ENCODE measurements at regions of chr3 and their contacts with region 1.

Region 1: DNA sequence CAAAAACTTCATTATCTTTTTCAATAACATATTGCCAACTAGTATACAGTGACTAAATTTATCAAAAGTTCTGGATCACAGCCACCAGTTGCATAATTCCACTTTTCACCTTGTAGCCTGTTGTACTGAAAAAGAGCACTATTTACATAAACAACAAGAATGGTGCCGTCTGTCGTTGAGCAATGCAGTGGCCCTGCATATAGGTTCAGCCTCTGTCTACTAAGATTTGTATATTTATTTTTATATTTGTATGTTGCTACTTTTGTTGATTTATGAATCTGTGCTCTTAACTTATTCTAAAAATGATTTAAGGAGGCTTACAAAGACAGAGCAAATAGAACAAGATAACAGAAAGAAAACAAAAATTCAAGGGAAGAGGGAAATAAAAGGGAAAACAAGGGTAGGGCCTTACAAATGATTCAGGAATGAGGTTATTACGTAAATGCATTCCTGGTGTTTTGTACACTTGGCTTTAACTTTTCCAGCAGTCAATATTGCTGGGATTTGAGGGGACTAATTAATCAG is 257.6 kb upstream of the STT3B start:
- DNase-seq: no peak
- ATAC-seq: peak; percentile 52
- H3K4me3 ChIP-seq: no peak overlapping the region
- H3K27ac ChIP-seq: peak overlapping the region; percentile 53 to 71
- H3K4me1 ChIP-seq: peaks cover 2 to 6% of the 10 kb centered on the region in 2 donors
- H3K27me3 ChIP-seq: no peaks in the 10 kb centered on the region

Region 2: GRCh38 chr3:31196881-31197364 is 78.2 kb before region 1 on chr3:
- intact Hi-C with region 1: loop called in 1 of 2 experiments (anchors 10 kb)
- DNase-seq: peak; percentile 59 to 82
- ATAC-seq: peak; percentile 49
- H3K4me3 ChIP-seq: peak overlapping the region in 1 of 2 donors; percentile 9
- H3K27ac ChIP-seq: peak overlapping the region in 1 of 2 donors; percentile 59
- H3K4me1 ChIP-seq: peaks cover 0 to 6% of the 10 kb centered on the region in 2 donors
- H3K27me3 ChIP-seq: no peaks in the 10 kb centered on the region

Region 3: GRCh38 chr3:31399271-31399670 is 124.2 kb after region 1 on chr3:
- intact Hi-C with region 1: no loop called
- DNase-seq: no peak
- ATAC-seq: no peak
- H3K4me3 ChIP-seq: no peak overlapping the region
- H3K27ac ChIP-seq: no peak overlapping the region
- H3K4me1 ChIP-seq: no peaks in the 10 kb centered on the region
- H3K27me3 ChIP-seq: no peaks in the 10 kb centered on the region

Region 4: GRCh38 chr3:31472479-31473390 is 197.6 kb after region 1 on chr3:
- intact Hi-C with region 1: no loop called
- DNase-seq: no peak
- ATAC-seq: no peak
- H3K4me3 ChIP-seq: no peak overlapping the region
- H3K27ac ChIP-seq: no peak overlapping the region
- H3K4me1 ChIP-seq: no peaks in the 10 kb centered on the region
- H3K27me3 ChIP-seq: no peaks in the 10 kb centered on the region